GM12878 (cell line): ENCODE measurements at regions of chr12 and their contacts with region 1.

Region 1: GRCh38 chr12:49288412-49288853 is 6.5 kb upstream of the PRPH start:
- DNase-seq: peak; percentile 19
- ATAC-seq: peak; percentile 80
- H3K4me3 ChIP-seq: no peak overlapping the region
- H3K27ac ChIP-seq: no peak overlapping the region
- H3K4me1 ChIP-seq: no peaks in the 10 kb centered on the region
- H3K27me3 ChIP-seq: peaks cover 0 to 2% of the 10 kb centered on the region in 2 experiments; a peak in 2 of 4 replicates
- CTCF ChIP-seq: peak; percentile 69 to 86 (median 84)
- EP300 ChIP-seq: no peak
- POLR2A ChIP-seq: no peak
- RAD21 ChIP-seq: peak; percentile 85

Region 2: DNA sequence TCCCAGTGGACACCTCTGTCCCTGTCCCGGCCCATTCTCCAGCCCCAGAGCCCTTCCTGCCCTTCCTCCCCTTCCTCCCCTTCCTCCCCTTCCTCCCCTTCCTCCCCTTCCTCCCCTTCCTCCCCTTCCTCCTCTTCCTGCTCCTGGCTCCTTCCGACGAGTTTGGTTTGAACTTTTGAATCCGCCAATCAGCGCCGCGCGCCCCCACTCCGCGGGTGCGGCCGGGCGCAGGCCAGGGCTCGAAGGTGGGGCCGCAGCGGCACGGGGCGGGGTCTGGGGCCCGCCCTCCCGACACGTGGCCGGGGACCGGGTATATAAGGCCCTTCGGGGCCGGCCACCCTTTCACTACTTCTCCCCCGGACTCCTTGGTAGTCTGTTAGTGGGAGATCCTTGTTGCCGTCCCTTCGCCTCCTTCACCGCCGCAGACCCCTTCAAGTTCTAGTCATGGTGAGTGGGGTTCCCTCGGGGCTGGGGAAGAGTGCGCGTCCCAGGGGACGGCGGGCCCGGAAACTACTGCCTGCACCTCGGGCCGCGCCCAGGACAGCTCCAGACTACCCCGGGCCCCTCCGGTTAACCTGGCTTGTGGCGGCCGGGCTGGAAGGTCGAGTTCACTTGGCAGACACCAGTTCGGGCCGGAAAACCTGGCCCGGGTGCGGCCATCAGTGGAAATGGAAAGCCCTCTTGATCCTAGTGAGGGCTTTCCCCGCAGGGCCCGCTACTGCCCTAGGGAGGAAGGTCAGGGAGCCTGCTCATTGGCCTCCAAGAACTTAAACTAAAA is 23.5 kb before region 1 on chr12 and contains the start of gene TUBA1C:
- CTCF ChIA-PET with region 1: interaction called, 12 read pairs
- POLR2A ChIA-PET with region 1: interaction called, 5 read pairs
- RAD21 ChIA-PET with region 1: no interaction called
- SMC1A ChIA-PET with region 1: no interaction called
- in situ Hi-C with region 1: no loop called
- intact Hi-C with region 1: no loop called
- DNase-seq: peak; percentile 57
- ATAC-seq: peak; percentile 95
- H3K4me3 ChIP-seq: peak within 1 kb of the TSS; percentile 96
- H3K27ac ChIP-seq: peak within 1 kb of the TSS; percentile 93
- H3K4me1 ChIP-seq: peaks cover 14% of the 10 kb centered on the region
- H3K27me3 ChIP-seq: no peaks in the 10 kb centered on the region
- CTCF ChIP-seq: no peak
- EP300 ChIP-seq: no peak
- POLR2A ChIP-seq: peak; percentile 98
- RAD21 ChIP-seq: no peak
- polyA plus RNA-seq, gene TUBA1C: 285 to 374 TPM

Region 3: DNA sequence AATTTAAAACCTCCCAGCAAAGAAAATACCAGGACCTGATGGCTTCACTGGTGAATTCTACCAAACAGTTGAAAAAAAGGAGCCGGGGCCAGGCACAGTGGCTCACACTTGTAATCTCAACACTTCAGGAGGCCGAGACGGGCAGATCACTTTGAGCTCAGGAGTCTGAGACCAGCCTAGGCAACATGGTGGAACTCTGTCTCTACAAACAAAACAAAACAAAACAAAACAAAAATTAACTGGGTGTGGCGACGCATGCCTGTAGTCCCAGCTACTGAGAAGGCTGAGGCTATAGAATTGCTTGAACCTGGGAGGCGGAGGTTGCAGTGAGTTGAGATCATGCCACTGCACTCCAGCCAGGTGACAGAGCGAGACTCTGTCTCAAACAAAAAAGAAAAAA is 21.0 kb after region 1 on chr12:
- CTCF ChIA-PET with region 1: interaction called, 10 read pairs
- POLR2A ChIA-PET with region 1: no interaction called
- RAD21 ChIA-PET with region 1: no interaction called
- SMC1A ChIA-PET with region 1: interaction called, 3 read pairs
- in situ Hi-C with region 1: no loop called
- intact Hi-C with region 1: no loop called
- DNase-seq: no peak
- ATAC-seq: no peak
- H3K4me3 ChIP-seq: no peak overlapping the region
- H3K27ac ChIP-seq: no peak overlapping the region
- H3K4me1 ChIP-seq: no peaks in the 10 kb centered on the region
- H3K27me3 ChIP-seq: no peaks in the 10 kb centered on the region; a peak in 1 of 4 replicates
- CTCF ChIP-seq: no peak
- EP300 ChIP-seq: no peak
- POLR2A ChIP-seq: no peak
- RAD21 ChIP-seq: no peak

Region 4: GRCh38 chr12:49331380-49332222 is 43.2 kb after region 1 on chr12:
- CTCF ChIA-PET with region 1: interaction called, 25 read pairs
- POLR2A ChIA-PET with region 1: no interaction called
- RAD21 ChIA-PET with region 1: interaction called, 15 read pairs
- SMC1A ChIA-PET with region 1: interaction called, 8 read pairs
- in situ Hi-C with region 1: loop called (anchors 5 kb)
- intact Hi-C with region 1: no loop called
- DNase-seq: no peak
- ATAC-seq: peak; percentile 85
- H3K4me3 ChIP-seq: no peak overlapping the region
- H3K27ac ChIP-seq: no peak overlapping the region
- H3K4me1 ChIP-seq: no peaks in the 10 kb centered on the region
- H3K27me3 ChIP-seq: peaks cover 3 to 12% of the 10 kb centered on the region in 2 experiments
- CTCF ChIP-seq: peak; percentile 55 to 68 (median 59)
- EP300 ChIP-seq: no peak
- POLR2A ChIP-seq: no peak
- RAD21 ChIP-seq: peak; percentile 58

Region 5: GRCh38 chr12:49342066-49342913 is 53.9 kb after region 1 on chr12:
- CTCF ChIA-PET with region 1: interaction called, 231 read pairs
- POLR2A ChIA-PET with region 1: interaction called, 3 read pairs
- RAD21 ChIA-PET with region 1: interaction called, 54 read pairs
- SMC1A ChIA-PET with region 1: interaction called, 22 read pairs
- in situ Hi-C with region 1: loop called (anchors 5 kb)
- intact Hi-C with region 1: loop called (anchors 1 kb)
- DNase-seq: no peak
- ATAC-seq: peak; percentile 80
- H3K4me3 ChIP-seq: peak overlapping the region; percentile 8; the same call in 1 of the 2 replicates
- H3K27ac ChIP-seq: no peak overlapping the region
- H3K4me1 ChIP-seq: peaks cover 32% of the 10 kb centered on the region
- H3K27me3 ChIP-seq: peaks cover 24 to 33% of the 10 kb centered on the region in 2 experiments
- CTCF ChIP-seq: peak; percentile 72 to 91 (median 91)
- EP300 ChIP-seq: no peak
- POLR2A ChIP-seq: no peak
- RAD21 ChIP-seq: peak; percentile 44; the same call in 1 of the 2 replicates

Region 6: GRCh38 chr12:49580572-49581535 is 292.4 kb after region 1 on chr12:
- CTCF ChIA-PET with region 1: interaction called, 11 read pairs
- POLR2A ChIA-PET with region 1: no interaction called
- RAD21 ChIA-PET with region 1: interaction called, 4 read pairs
- SMC1A ChIA-PET with region 1: interaction called, 6 read pairs
- in situ Hi-C with region 1: no loop called
- intact Hi-C with region 1: no loop called
- DNase-seq: no peak
- ATAC-seq: peak; percentile 92
- H3K4me3 ChIP-seq: peak overlapping the region; percentile 57; the same call in 1 of the 2 replicates
- H3K27ac ChIP-seq: peak overlapping the region; percentile 41
- H3K4me1 ChIP-seq: peaks cover 17% of the 10 kb centered on the region
- H3K27me3 ChIP-seq: no peaks in the 10 kb centered on the region
- CTCF ChIP-seq: peak; percentile 89 to 92 (median 90)
- EP300 ChIP-seq: no peak
- POLR2A ChIP-seq: no peak
- RAD21 ChIP-seq: peak; percentile 88